Dendritic cell treated with granulocyte-macrophage colony-stimulating factor and Interleukin-4, amounts not matched to agents 40 ng/mL and 50 ng/mL, for 4 days (primary cell): ENCODE measurements at regions of chr14 and their contacts with region 1.

Region 1: GRCh38 chr14:75560962-75561432 is 17.4 kb upstream of the FLVCR2 start:
- H3K4me3 Mint-ChIP-seq: no peak overlapping the region
- H3K27ac Mint-ChIP-seq: no peak overlapping the region
- H3K4me1 Mint-ChIP-seq: peaks cover 30% of the 10 kb centered on the region
- H3K27me3 Mint-ChIP-seq: no peaks in the 10 kb centered on the region

Region 2: GRCh38 chr14:75518625-75519024 is 42.4 kb before region 1 on chr14:
- intact Hi-C with region 1: loop called (anchors 2 kb)
- H3K4me3 Mint-ChIP-seq: no peak overlapping the region
- H3K27ac Mint-ChIP-seq: no peak overlapping the region
- H3K4me1 Mint-ChIP-seq: peaks cover 62% of the 10 kb centered on the region
- H3K27me3 Mint-ChIP-seq: no peaks in the 10 kb centered on the region